Esophagus squamous epithelium (tissue), 5 donors: ENCODE measurements at regions of chr6 and their contacts with region 1.

Region 1: DNA sequence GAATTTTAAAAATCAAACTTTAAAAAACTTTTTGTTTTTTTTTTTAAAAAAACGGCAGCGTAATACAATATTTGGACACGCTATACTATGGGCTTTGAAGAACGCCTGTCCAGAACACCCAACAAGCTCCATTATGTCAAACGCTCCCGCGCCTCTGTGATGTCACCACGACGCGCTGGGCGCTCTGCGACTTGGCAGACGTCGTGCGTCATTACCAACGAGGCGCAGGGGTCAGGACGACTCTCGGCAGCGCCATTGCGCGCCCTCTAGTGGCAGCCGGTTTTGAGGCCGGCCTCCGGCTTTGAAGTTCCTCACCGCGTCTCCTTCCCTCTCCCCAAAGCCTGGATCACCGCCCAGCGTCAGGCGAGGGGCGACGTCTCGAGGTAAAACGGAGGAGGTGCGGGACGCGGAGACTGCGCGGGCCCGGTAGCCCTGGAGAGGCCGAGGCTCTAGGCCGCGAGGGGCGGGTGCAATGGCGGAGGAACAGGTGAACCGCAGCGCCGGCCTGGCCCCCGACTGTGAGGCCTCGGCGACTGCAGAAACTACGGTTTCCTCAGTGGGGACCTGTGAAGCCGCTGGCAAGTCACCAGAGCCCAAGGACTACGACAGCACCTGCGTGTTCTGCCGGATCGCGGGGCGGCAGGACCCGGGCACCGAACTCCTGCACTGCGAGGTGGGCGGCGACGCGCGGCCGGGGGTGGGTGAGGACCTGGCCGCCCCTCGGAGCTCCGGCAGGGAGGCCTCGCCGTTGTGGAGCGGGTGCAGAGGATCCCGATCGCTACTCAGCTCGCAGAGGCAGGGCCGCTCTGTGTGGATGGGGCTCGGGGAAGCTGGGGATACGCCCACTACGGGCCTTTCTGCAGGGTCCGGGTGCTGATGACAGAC is at the start of gene HINT3:
- DNase-seq: peak; percentile 81
- H3K4me3 ChIP-seq: peak within 1 kb of the TSS; percentile 81 to 98 (median 88)
- H3K27ac ChIP-seq: peak within 1 kb of the TSS; percentile 93 to 97 (median 95)
- H3K4me1 ChIP-seq: peaks cover 16 to 53% (median 18%) of the 10 kb centered on the region in 3 donors
- H3K27me3 ChIP-seq: no peaks in the 10 kb centered on the region
- CTCF ChIP-seq: peak; percentile 94 to 99 (median 98)
- POLR2A ChIP-seq: peak in 3 of 4 donors; percentile 13 to 76 (median 42)
- total RNA-seq, gene HINT3: 15.4 to 22.5 (median 20.7) TPM

Region 2: GRCh38 chr6:125314019-125314581 is 642.6 kb before region 1 on chr6:
- intact Hi-C with region 1: loop called (anchors 10 kb)
- DNase-seq: peak; percentile 4
- H3K4me3 ChIP-seq: no peak overlapping the region
- H3K27ac ChIP-seq: no peak overlapping the region
- H3K4me1 ChIP-seq: peaks cover 0 to 4% (median 0%) of the 10 kb centered on the region in 3 donors
- H3K27me3 ChIP-seq: peaks cover 0 to 4% (median 0%) of the 10 kb centered on the region in 4 donors
- CTCF ChIP-seq: peak; percentile 53 to 85 (median 74)
- POLR2A ChIP-seq: no peak

Region 3: DNA sequence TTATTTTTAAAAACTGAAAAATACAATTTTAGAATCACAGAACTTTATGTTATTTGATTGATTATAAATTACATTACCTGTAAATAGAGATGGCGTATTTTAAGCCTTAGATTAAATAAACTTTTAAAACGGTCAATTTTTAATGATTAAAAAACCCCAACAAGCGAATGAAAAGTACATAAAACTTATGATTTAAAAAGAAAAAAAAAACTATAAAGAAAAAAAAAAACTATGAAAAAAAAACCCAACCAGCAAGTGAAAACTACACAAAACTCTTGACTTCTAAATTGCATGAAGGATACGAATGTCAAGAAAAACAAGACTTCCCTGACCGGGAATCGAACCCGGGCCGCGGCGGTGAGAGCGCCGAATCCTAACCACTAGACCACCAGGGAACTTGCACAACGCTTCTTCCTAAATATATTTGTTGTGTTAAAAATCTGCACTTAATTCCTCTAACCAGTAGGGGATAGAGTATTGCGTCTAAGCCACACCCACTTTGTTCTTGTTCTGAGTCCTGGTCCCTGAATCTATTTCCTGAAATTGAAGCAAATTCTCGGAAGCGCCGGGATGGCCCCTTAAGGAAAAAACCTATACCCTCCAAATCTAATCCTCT is 176.7 kb before region 1 on chr6:
- intact Hi-C with region 1: loop called (anchors 5 kb)
- DNase-seq: peak; percentile 33
- H3K4me3 ChIP-seq: peak overlapping the region; percentile 41 to 87 (median 70)
- H3K27ac ChIP-seq: peak overlapping the region; percentile 90 to 98 (median 96)
- H3K4me1 ChIP-seq: peaks cover 0 to 19% (median 0%) of the 10 kb centered on the region in 3 donors
- H3K27me3 ChIP-seq: no peaks in the 10 kb centered on the region
- CTCF ChIP-seq: peak in 4 of 6 experiments; percentile 38 to 58 (median 52)
- POLR2A ChIP-seq: no peak

Region 4: GRCh38 chr6:125858427-125859320 is 98.1 kb before region 1 on chr6:
- intact Hi-C with region 1: loop called (anchors 10 kb)
- DNase-seq: no peak
- H3K4me3 ChIP-seq: no peak overlapping the region
- H3K27ac ChIP-seq: no peak overlapping the region
- H3K4me1 ChIP-seq: no peaks in the 10 kb centered on the region
- H3K27me3 ChIP-seq: no peaks in the 10 kb centered on the region
- CTCF ChIP-seq: peak in 5 of 6 experiments; percentile 60 to 79 (median 72)
- POLR2A ChIP-seq: no peak